ENCODE measurements at regions of chr20 and their contacts with region 1.

Region 1: DNA sequence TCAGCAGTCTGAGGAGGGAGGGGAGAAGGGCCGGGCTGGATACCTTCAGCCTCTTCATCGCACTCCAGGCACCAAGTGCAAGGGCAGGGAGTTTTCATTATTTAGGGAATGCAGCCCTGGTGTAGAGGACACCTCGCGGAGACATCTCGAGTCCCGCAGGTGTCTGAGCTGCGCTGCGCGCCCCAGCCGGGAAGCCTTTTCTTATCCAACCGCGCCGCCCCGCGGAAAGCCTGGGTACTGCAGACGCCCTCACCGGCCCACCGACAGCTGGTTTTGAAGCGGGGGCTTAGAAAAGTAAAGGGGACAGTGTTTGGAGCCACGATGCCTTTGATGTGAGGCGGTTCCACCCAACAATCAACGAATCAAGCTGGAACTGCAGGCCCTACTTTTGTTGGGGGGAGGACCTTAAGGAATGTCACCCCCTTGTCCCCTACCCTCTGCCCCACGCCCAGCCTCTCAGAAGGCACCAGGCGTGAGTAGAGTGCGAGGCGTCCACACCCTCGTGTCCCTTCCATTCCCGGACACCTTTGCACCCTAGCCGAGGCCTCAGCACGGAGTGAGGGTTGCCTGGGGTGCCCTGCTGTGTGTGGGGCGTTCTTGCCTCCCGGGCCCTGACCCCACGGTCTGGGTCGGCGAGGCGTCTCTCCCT is 8.6 kb downstream of the NKX2-2 start:
- DNase-seq: peak; percentile 78
- ATAC-seq: peak; percentile 55
- H3K4me3 Mint-ChIP-seq: no peak overlapping the region
- H3K27ac Mint-ChIP-seq: no peak overlapping the region
- H3K4me1 Mint-ChIP-seq: peaks cover 28% of the 10 kb centered on the region
- H3K27me3 Mint-ChIP-seq: peaks cover 64% of the 10 kb centered on the region

Region 2: DNA sequence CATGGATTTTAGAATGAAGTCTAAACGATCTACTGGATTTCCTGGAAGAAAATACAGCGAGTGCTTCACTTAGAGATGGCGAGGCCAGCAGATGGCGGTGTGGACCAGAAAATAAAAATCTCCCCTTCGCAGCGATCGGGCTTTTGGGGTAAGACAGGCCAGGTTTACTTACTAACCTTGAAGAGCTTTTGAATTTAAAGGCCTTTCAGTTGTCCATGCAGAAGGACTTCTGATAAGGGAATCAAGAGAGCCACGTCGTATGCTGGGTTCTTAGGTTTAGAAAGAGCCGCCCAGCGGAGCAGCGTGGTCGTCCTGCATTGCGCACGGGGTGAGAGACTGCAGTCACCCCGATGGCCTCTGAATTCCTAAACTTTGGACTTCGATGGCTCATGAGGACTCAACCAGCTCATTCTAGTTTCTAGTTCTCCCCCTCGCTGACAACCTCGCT is 667.7 kb before region 1 on chr20:
- CTCF ChIA-PET with region 1: interaction called, 12 read pairs
- DNase-seq: peak; percentile 52
- ATAC-seq: no peak
- H3K4me3 Mint-ChIP-seq: no peak overlapping the region
- H3K27ac Mint-ChIP-seq: no peak overlapping the region
- H3K4me1 Mint-ChIP-seq: no peaks in the 10 kb centered on the region
- H3K27me3 Mint-ChIP-seq: peaks cover 16% of the 10 kb centered on the region

Region 3: GRCh38 chr20:20860078-20860806 is 645.0 kb before region 1 on chr20:
- CTCF ChIA-PET with region 1: interaction called, 29 read pairs
- DNase-seq: peak; percentile 87
- ATAC-seq: peak; percentile 76
- H3K4me3 Mint-ChIP-seq: no peak overlapping the region
- H3K27ac Mint-ChIP-seq: no peak overlapping the region
- H3K4me1 Mint-ChIP-seq: no peaks in the 10 kb centered on the region
- H3K27me3 Mint-ChIP-seq: peaks cover 16% of the 10 kb centered on the region

Region 4: DNA sequence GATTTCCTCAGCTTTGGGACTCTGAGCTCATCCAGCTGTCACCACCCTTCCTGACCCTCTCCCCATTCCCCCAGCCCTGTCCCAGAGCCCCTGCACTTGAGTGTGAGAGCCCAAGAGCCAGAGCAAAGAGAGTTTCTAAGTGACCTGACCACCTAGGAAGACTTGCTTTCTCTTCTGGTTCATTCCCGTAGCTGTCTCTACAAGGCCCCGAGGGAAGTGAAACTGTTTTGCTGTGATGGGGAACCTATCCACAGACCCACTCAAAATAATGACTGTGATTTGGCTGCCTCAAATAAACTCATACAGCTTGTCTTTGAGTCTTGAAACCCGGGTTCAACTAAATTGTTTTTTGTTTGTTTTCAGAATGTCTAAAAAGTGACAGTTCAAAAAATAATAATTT is 276.8 kb before region 1 on chr20:
- CTCF ChIA-PET with region 1: interaction called, 10 read pairs
- DNase-seq: no peak
- ATAC-seq: no peak
- H3K4me3 Mint-ChIP-seq: no peak overlapping the region
- H3K27ac Mint-ChIP-seq: no peak overlapping the region
- H3K4me1 Mint-ChIP-seq: no peaks in the 10 kb centered on the region
- H3K27me3 Mint-ChIP-seq: no peaks in the 10 kb centered on the region

Region 5: DNA sequence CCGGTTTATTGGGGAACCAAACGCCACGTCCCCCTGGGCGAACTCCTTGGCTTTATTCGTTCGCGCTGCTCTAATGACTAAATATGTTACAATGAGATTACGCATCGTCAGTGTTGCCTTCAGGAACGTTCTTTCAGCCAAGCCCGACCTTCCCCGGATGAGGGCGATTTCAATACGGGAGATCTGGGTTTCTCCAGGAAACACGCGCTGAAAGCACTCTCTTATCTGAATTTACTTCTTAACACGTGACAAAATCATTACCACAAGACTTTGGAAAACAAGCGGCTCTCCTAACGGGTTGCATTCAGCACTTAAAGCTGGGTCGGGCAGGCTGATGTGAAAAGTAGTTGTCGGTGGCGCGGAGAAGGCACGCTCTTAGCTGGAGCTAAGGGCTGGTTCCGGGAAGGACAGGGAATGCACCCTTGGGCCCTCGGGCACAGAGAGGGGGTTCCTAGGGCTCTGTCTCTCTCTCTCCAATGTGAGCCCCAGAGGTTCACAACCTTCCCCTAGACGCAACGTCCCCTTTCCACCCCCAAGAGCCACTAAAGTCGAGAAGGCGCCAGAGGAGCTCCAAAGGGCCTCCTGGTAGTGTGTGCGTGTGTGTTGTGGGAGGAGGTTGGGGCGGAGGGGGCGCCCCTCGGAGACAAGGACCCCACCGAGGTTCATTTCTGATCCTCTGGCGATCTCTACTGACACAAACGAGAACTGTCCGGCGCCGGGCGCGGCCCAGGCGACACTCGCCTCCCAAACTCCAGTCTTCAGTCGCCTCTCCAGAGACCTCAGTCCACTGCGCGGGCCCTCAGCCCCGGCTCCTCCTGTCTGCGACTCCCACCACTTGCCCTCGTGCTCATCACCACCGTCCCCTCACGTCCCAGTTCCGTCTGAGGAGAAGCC is 15.7 kb after region 1 on chr20:
- CTCF ChIA-PET with region 1: interaction called, 11 read pairs
- DNase-seq: peak; percentile 22
- ATAC-seq: no peak
- H3K4me3 Mint-ChIP-seq: no peak overlapping the region
- H3K27ac Mint-ChIP-seq: peak overlapping the region; percentile 55
- H3K4me1 Mint-ChIP-seq: no peaks in the 10 kb centered on the region
- H3K27me3 Mint-ChIP-seq: peaks cover 91% of the 10 kb centered on the region